Thyroid gland (tissue), 4 donors: ENCODE measurements at regions of chr4 and their contacts with region 1.

Region 1: DNA sequence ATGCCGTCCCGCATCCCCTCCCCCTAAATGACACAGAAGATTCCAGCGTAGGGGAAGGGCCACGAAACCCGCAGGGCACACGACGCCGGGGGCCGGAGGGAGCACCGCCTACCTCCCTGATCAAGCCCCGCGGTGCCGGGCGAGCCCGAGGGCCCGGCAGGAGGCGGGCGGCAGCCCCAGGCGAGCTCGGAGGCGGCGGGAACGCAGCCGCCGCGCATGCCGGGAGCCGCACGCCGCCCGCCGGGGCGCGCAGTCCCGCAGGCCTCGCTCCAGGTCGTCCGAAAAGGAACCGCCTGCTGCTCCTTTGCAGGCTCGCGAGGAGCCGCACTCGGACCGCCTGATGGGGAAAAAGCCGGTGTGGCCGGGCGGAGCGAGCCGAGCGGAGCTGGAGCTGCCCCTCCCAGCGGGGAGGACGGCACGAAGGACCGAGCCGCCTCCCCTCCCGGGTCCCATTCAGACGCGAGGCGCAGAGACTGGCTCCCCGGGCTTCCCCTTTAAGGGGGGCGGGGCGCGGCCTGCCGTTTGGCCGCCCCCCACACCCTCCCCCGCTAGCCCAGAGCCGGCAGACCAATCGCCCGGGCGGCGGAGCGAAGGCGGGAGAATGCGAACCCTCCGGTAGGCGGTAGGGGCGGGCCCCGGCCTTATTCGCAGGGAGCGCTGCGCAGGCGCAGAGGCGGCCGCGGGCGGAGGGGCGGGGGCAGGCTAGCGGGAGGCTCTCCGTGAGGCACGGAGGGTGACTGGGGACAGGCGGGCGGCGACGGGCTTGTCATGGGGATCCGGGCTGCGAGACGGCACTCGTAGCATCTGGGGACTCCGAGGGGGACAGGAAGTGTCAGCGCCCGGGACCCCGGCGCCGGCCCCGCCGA is 561 bp upstream of the ING2 start:
- DNase-seq: peak; percentile 100
- H3K4me3 ChIP-seq: peak overlapping the region; percentile 84 to 97 (median 85)
- H3K27ac ChIP-seq: peak overlapping the region; percentile 97 to 98 (median 98)
- H3K4me1 ChIP-seq: peaks cover 5 to 15% of the 10 kb centered on the region in 2 donors
- H3K27me3 ChIP-seq: no peaks in the 10 kb centered on the region
- CTCF ChIP-seq: peak in 2 of 6 experiments; percentile 52 to 70
- POLR2A ChIP-seq: peak in 1 of 2 donors; percentile 80

Region 2: DNA sequence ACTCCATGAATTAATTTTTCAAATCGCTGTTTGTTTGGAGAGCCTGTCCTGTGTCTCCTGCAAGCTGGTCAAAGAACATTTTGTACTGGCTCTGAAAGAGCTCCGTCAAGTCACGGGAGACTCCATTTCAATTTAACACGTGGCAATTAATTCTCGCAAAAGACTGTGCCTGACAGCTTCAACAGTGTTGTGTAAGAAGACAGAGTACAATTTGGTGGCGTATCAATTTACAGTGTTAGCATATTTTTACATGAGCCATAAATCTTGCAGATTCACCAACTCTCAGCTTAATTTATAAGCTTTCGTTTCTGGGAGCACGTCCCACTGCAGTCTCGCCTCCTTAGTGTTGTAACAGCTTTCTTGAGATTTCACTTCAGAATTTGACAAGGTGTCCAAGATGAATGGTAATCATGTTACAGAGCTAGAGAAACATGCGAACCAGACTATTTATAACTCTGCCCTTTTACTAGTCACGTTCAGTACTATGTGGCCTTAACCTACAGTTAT is 83.9 kb after region 1 on chr4:
- intact Hi-C with region 1: no loop called
- DNase-seq: no peak
- H3K4me3 ChIP-seq: no peak overlapping the region
- H3K27ac ChIP-seq: no peak overlapping the region
- H3K4me1 ChIP-seq: no peaks in the 10 kb centered on the region
- H3K27me3 ChIP-seq: no peaks in the 10 kb centered on the region
- CTCF ChIP-seq: no peak
- POLR2A ChIP-seq: no peak

Region 3: GRCh38 chr4:183659029-183659871 is 155.0 kb after region 1 on chr4 and contains the starts of genes RWDD4 and TRAPPC11:
- intact Hi-C with region 1: loop called (anchors 10 kb)
- DNase-seq: peak; percentile 97 to 98
- H3K4me3 ChIP-seq: peak within 1 kb of the TSS; percentile 80 to 95 (median 87)
- H3K27ac ChIP-seq: peak within 1 kb of the TSS; percentile 80 to 91 (median 85)
- H3K4me1 ChIP-seq: peaks cover 0 to 13% of the 10 kb centered on the region in 2 donors
- H3K27me3 ChIP-seq: no peaks in the 10 kb centered on the region
- CTCF ChIP-seq: peak in 4 of 6 experiments; percentile 36 to 50 (median 43)
- POLR2A ChIP-seq: peak; percentile 31 to 97
- total RNA-seq, gene RWDD4: 33.3 to 43.5 (median 41.5) TPM
- total RNA-seq, gene TRAPPC11: 34.6 to 84.1 (median 41.8) TPM